Caco-2 (cell line): ENCODE measurements at regions of chr5 and their contacts with region 1.

Region 1: GRCh38 chr5:141960449-141961202 is 2.6 kb upstream of the PCDH12 start:
- DNase-seq: peak; percentile 86 to 87
- H3K4me3 ChIP-seq: no peak overlapping the region
- H3K4me3 Mint-ChIP-seq: no peak overlapping the region
- H3K27ac Mint-ChIP-seq: no peak overlapping the region
- H3K4me1 ChIP-seq: 0 out of 2 replicates have a peak, but pooled peaks cover 5% of the 10 kb centered on the region
- H3K4me1 Mint-ChIP-seq: no peaks in the 10 kb centered on the region
- H3K27me3 ChIP-seq: no peaks in the 10 kb centered on the region
- H3K27me3 Mint-ChIP-seq: no peaks in the 10 kb centered on the region
- CTCF ChIP-seq: peak; percentile 81

Region 2: DNA sequence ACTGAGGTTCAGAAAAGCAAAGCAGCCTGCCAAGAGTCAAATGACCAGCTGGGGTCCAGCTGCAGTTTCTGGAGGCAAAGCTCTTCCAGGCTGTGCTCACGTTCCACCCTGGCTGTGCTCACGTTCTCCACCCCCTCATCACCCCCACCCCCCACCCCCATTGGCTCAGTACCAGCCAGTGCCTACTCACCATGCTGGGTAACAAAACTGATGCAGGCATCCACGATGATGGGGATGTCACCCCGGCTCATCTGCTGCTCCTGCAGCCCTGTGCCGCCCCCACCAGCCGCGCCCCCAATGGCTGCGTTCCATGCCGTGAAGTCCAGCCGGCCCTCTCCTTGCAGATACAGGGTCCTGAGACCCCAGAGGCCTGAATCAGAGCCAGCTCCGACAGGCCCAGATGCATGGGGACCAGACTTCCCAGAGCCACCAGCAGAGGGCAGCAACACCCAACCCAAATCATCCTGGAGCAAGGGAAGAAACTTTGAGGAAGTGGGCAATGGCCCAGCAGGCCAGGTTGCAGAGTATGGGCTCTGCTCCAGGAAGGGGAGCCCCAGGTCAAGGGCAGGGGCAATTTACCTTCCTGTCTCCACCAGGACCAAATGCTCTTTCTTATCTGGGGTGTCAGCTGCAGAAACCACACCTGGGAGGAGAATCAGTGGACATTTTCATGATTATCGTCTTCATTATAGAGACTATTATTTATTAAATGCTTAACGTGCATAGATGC is 295.7 kb before region 1 on chr5:
- CTCF ChIA-PET with region 1: interaction called, 5 read pairs
- POLR2A ChIA-PET with region 1: no interaction called
- intact Hi-C with region 1: loop called (anchors 1 kb)
- DNase-seq: peak; percentile 76 to 84
- H3K4me3 ChIP-seq: no peak overlapping the region
- H3K4me3 Mint-ChIP-seq: no peak overlapping the region
- H3K27ac Mint-ChIP-seq: no peak overlapping the region
- H3K4me1 ChIP-seq: no peaks in the 10 kb centered on the region
- H3K4me1 Mint-ChIP-seq: no peaks in the 10 kb centered on the region
- H3K27me3 ChIP-seq: no peaks in the 10 kb centered on the region
- H3K27me3 Mint-ChIP-seq: no peaks in the 10 kb centered on the region
- CTCF ChIP-seq: peak; percentile 85 to 94

Region 3: GRCh38 chr5:141691867-141692532 is 268.6 kb before region 1 on chr5:
- CTCF ChIA-PET with region 1: interaction called, 41 read pairs
- POLR2A ChIA-PET with region 1: no interaction called
- intact Hi-C with region 1: loop called (anchors 1 kb)
- DNase-seq: peak; percentile 81 to 92
- H3K4me3 ChIP-seq: peak overlapping the region; percentile 39
- H3K4me3 Mint-ChIP-seq: peak overlapping the region; percentile 71
- H3K27ac Mint-ChIP-seq: no peak overlapping the region
- H3K4me1 ChIP-seq: no peaks in the 10 kb centered on the region
- H3K4me1 Mint-ChIP-seq: no peaks in the 10 kb centered on the region
- H3K27me3 ChIP-seq: no peaks in the 10 kb centered on the region; the same call in 1 of the 2 replicates
- H3K27me3 Mint-ChIP-seq: peaks cover 7% of the 10 kb centered on the region
- CTCF ChIP-seq: peak; percentile 88 to 97

Region 4: DNA sequence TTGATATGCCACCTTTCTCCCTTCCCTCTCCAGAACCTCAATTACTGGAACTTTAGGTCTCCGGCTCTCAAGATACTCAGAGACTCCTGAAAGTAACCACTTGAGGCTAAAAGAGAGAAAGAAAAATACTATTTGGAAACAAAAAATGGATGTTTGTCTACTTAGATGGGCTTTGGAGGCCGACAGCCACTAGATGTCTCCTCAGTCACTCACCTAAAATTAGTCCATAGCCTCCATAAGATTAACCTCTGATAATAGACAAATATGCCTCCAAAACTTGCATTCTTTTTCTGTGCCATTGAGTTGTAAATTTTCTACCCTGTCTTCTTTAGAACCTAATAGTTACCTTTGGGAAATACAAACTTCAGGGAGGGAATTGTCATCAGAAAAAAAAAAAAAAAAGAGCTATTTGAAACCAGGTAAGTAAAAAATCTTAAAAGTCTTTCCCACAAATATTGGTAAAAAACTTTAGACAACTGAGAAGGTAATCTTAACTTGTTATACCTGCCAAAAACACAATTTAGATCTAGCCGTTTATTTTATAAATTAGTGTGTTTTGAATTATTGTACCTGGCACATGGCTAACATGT is 71.2 kb before region 1 on chr5:
- CTCF ChIA-PET with region 1: interaction called, 33 read pairs
- POLR2A ChIA-PET with region 1: no interaction called
- intact Hi-C with region 1: loop called (anchors 1 kb)
- DNase-seq: no peak
- H3K4me3 ChIP-seq: no peak overlapping the region
- H3K4me3 Mint-ChIP-seq: no peak overlapping the region
- H3K27ac Mint-ChIP-seq: no peak overlapping the region
- H3K4me1 ChIP-seq: no peaks in the 10 kb centered on the region
- H3K4me1 Mint-ChIP-seq: no peaks in the 10 kb centered on the region
- H3K27me3 ChIP-seq: no peaks in the 10 kb centered on the region
- H3K27me3 Mint-ChIP-seq: peaks cover 11% of the 10 kb centered on the region
- CTCF ChIP-seq: peak in 1 of 2 experiments; percentile 52

Region 5: GRCh38 chr5:141914199-141914743 is 46.4 kb before region 1 on chr5:
- CTCF ChIA-PET with region 1: interaction called, 17 read pairs
- POLR2A ChIA-PET with region 1: no interaction called
- intact Hi-C with region 1: no loop called
- DNase-seq: peak; percentile 51 to 63
- H3K4me3 ChIP-seq: peak overlapping the region; percentile 33
- H3K4me3 Mint-ChIP-seq: peak overlapping the region; percentile 34
- H3K27ac Mint-ChIP-seq: no peak overlapping the region
- H3K4me1 ChIP-seq: peaks cover 6% of the 10 kb centered on the region
- H3K4me1 Mint-ChIP-seq: peaks cover 7% of the 10 kb centered on the region
- H3K27me3 ChIP-seq: no peaks in the 10 kb centered on the region
- H3K27me3 Mint-ChIP-seq: no peaks in the 10 kb centered on the region
- CTCF ChIP-seq: peak in 1 of 2 experiments; percentile 45

Region 6: DNA sequence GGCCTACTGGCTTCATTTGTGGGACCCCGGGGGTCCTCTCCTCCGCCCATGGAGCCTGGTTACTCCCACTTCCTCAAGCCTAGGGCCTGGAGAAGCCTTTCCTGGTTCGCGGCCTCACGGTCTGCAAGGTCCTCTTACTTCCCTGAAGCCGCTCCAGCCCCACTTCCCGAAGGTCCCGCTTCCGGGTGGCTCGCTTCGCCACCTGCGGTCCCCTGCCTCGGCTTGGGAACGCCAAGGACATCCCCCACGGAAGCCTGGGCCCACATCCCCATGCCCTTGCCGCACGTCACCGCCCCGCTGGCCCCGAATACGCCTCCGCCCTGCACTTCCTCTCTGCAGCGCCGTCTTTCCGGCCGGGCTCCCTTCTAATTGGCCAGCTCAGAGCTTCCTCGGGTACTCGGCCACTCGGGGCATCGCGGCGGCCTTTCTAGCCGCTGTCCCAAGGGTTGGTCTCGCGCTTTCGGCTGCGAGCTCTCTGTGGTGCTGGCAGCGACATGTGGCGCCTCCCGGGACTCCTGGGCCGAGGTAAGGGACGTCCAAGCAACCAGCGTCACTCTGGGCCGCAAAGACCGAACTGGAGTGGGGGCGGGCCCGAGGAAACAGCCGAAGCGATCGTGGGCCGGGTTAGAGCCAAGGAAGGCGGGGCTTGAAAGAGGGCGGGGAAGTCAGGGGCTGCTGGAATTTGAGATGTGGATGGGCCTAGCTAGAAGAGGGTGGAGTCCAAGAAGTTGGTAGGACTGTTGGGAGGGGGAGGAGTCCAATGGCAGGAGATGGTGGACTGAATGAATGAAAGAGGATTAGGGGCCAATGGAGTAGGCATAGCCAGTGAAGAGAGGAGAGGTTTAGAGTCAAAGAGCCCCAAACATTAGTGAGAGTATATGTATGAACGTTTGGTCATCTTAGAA is 36.9 kb before region 1 on chr5 and contains the start of gene DELE1:
- CTCF ChIA-PET with region 1: interaction called, 22 read pairs
- POLR2A ChIA-PET with region 1: interaction called, 17 read pairs
- intact Hi-C with region 1: no loop called
- DNase-seq: peak; percentile 93 to 95
- H3K4me3 ChIP-seq: peak within 1 kb of the TSS; percentile 51
- H3K4me3 Mint-ChIP-seq: peak within 1 kb of the TSS; percentile 81
- H3K27ac Mint-ChIP-seq: peak within 1 kb of the TSS; percentile 96
- H3K4me1 ChIP-seq: peaks cover 16% of the 10 kb centered on the region
- H3K4me1 Mint-ChIP-seq: peaks cover 14% of the 10 kb centered on the region
- H3K27me3 ChIP-seq: no peaks in the 10 kb centered on the region
- H3K27me3 Mint-ChIP-seq: no peaks in the 10 kb centered on the region
- CTCF ChIP-seq: no peak
- total RNA-seq, gene DELE1: 67.6 and 78.6 TPM in 2 replicates

Region 7: DNA sequence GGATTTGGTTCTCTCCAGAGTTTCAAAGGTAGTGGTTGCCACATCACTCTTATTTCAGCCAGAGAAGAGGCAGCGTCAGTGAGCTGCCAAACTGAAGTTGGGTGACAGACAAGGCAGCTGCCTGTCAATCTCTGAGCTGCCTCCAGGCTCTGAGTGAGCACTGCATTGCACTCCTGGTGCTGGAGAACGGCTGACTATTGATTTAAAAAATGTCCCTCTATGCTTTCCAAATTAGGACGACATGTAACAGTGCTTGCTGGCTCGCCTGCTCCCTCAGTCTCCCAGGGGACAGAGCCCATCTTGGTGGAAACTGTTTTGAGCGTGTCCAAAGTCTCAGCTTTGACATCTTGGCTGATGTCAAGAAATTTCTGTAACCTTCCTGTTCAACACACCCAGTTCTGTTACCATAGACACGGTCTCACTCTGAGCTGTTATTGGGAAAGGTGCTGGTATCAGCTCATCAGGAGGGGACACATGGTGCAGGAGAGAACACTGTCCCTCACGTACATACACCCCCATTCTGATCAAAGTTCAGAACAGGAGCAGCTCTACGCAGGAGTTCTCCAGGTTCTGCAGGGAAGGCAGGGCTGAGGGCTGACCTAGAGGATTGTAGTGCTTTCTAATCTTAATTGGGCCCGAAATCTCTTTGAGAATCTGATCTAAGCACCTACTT is 18.3 kb before region 1 on chr5:
- CTCF ChIA-PET with region 1: interaction called, 10 read pairs
- POLR2A ChIA-PET with region 1: no interaction called
- intact Hi-C with region 1: no loop called
- DNase-seq: no peak
- H3K4me3 ChIP-seq: no peak overlapping the region
- H3K4me3 Mint-ChIP-seq: no peak overlapping the region
- H3K27ac Mint-ChIP-seq: no peak overlapping the region
- H3K4me1 ChIP-seq: no peaks in the 10 kb centered on the region
- H3K4me1 Mint-ChIP-seq: no peaks in the 10 kb centered on the region
- H3K27me3 ChIP-seq: no peaks in the 10 kb centered on the region
- H3K27me3 Mint-ChIP-seq: no peaks in the 10 kb centered on the region
- CTCF ChIP-seq: no peak